Mammary epithelial cell (primary cell): ENCODE measurements at regions of chr11 and their contacts with region 1.

Region 1: GRCh38 chr11:110195845-110196754 is 100.3 kb downstream of the RDX start:
- DNase-seq: peak; percentile 94
- H3K4me3 ChIP-seq: no peak overlapping the region
- H3K27ac ChIP-seq: peak overlapping the region; percentile 95
- H3K4me1 ChIP-seq: peaks cover 64% of the 10 kb centered on the region
- H3K27me3 ChIP-seq: no peaks in the 10 kb centered on the region
- CTCF ChIP-seq: no peak

Region 2: DNA sequence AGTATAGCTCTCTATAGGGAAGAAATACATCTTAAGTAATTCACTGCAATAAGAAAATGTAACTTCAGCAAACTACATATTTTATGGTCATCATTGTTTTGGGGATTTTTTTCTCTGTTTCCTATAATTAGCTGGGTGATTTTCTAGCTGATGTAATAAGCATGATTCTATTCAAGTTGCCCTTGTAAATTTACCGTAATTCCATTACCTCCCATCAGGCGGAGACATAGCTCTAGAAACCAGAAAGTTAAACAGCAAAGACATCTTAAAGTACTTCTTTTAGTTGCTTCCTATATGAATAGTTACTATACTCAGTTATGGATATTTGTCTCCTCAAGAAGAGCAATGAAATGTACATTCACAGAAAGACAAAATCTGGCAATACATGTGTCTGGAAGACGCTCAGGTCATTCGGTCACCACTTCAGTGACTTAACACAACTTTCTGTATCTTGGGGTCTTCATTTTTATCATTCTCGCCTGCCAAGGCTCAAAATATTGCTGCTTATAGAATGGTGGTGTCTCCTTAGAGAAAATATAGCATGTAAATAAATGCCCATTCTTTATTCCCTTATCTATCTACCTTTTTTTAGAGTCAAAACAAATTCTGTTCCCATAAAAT is 342.8 kb before region 1 on chr11:
- CTCF ChIA-PET with region 1: no interaction called
- dilution Hi-C with region 1: no loop called
- in situ Hi-C with region 1: no loop called
- intact Hi-C with region 1: loop called (anchors 10 kb)
- DNase-seq: peak; percentile 63
- H3K4me3 ChIP-seq: no peak overlapping the region
- H3K27ac ChIP-seq: no peak overlapping the region
- H3K4me1 ChIP-seq: peaks cover 4% of the 10 kb centered on the region
- H3K27me3 ChIP-seq: no peaks in the 10 kb centered on the region
- CTCF ChIP-seq: peak; percentile 79 to 87

Region 3: DNA sequence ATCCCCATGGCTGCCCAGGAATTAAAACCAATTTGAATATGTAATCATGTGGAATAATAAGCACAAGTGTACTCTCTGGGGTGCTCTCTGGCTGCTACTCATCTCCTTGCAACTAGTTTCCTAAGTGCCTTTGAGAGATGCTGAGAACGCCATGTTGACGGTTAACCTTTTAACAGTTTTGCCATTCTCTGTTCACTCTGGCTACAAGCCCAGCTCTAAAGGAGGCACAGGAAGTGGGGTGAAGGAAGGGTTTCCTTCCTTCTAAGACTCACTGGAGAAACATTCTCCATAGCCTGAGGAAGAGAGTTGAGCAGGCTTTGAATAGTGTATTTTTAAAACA is 224.9 kb before region 1 on chr11:
- CTCF ChIA-PET with region 1: no interaction called
- dilution Hi-C with region 1: no loop called
- in situ Hi-C with region 1: loop called in 1 of 2 experiments (anchors 25 kb)
- intact Hi-C with region 1: no loop called
- DNase-seq: peak; percentile 42
- H3K4me3 ChIP-seq: no peak overlapping the region
- H3K27ac ChIP-seq: no peak overlapping the region
- H3K4me1 ChIP-seq: peaks cover 9% of the 10 kb centered on the region
- H3K27me3 ChIP-seq: no peaks in the 10 kb centered on the region
- CTCF ChIP-seq: no peak

Region 4: DNA sequence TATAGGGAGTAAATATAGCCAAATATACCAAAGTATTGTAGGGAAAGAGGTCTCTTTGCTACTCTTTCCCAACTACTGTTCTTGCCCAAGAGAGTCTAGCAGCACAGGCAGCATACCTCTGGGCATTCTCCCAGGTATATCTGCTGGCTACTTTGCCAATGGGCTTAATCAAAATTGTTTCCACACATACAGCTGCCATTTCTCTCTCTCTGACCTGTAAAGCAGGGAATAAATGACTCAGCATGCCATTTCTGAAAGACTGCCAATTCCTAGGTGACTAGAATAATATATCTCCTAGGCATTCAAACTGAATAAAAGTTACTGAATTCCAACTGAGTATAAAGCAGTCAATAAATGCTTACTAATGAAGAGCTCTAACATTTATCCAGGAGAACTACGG is 55.7 kb after region 1 on chr11:
- CTCF ChIA-PET with region 1: no interaction called
- dilution Hi-C with region 1: no loop called
- in situ Hi-C with region 1: no loop called
- intact Hi-C with region 1: loop called (anchors 1 kb)
- DNase-seq: peak; percentile 87
- H3K4me3 ChIP-seq: no peak overlapping the region
- H3K27ac ChIP-seq: peak overlapping the region; percentile 10
- H3K4me1 ChIP-seq: peaks cover 6% of the 10 kb centered on the region
- H3K27me3 ChIP-seq: no peaks in the 10 kb centered on the region
- CTCF ChIP-seq: no peak

Region 5: GRCh38 chr11:110376711-110377324 is 180.7 kb after region 1 on chr11:
- CTCF ChIA-PET with region 1: interaction called, 4 read pairs
- dilution Hi-C with region 1: no loop called
- in situ Hi-C with region 1: loop called in 1 of 2 experiments (anchors 10 kb)
- intact Hi-C with region 1: loop called (anchors 1 kb)
- DNase-seq: peak; percentile 79
- H3K4me3 ChIP-seq: peak overlapping the region; percentile 26 to 48 (median 40)
- H3K27ac ChIP-seq: no peak overlapping the region
- H3K4me1 ChIP-seq: peaks cover 14% of the 10 kb centered on the region
- H3K27me3 ChIP-seq: no peaks in the 10 kb centered on the region
- CTCF ChIP-seq: peak; percentile 72 to 82